IMR-90 (cell line): ENCODE measurements at regions of chr18 and their contacts with region 1.

Region 1: DNA sequence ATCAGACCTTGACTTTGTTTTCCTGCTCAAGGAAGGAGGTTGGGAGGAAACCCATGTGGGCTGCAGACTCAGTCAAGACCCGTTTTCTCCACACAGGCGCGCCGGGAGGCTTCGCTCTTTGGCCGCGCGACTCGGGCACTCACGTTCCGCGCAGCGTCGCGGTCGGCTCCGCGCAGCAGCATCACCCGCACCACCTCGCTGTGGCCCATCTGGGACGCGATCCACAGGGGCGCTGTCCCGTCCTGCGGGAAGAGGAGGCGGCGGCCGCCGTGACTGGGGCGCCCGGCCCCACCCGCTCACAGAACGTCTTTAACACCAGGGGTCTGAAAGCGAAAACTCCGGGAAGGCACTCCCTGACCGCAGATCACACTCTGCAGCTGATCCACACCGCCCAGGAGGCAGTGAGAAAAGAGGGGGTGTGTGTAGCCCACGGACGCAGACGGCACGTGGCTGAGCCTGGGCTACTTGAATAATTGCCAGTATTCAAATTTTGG is 33.1 kb upstream of the NPC1 start:
- DNase-seq: no peak
- ATAC-seq: peak; percentile 80
- H3K4me3 ChIP-seq: peak overlapping the region; percentile 48
- H3K27ac ChIP-seq: no peak overlapping the region; the same call in 1 of the 2 replicates
- H3K4me1 ChIP-seq: peaks cover 6% of the 10 kb centered on the region
- H3K27me3 ChIP-seq: peaks cover 23% of the 10 kb centered on the region
- CTCF ChIP-seq: no peak
- POLR2A ChIP-seq: no peak
- RAD21 ChIP-seq: no peak

Region 2: DNA sequence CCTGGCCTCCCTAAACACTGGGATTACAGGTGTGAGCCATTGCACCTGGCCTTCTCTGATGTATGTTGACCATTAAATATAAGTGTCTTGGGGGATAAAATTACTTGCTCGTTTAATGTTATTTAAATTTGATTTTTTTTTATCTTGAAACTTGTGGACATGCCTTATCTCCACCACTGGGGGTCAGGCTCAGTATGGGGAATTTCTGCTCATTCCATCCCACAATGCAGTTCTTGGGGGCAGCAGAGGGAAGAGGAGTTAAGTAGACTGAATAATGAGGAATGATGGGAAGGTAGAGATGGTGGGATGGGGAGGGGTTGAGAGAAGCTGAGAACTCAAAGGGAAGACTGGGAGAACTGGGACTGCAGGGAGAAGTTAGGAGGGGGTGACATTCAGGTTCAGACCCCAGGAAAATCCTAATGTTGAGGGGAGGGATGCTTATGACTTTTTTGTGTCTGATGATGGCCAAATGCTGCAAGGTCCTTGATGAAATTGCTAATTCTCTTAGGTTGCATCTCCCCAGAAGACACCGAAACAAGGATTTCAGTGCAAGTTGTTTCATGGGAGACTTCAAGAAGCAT is 1704.6 kb before region 1 on chr18:
- CTCF ChIA-PET with region 1: no interaction called
- POLR2A ChIA-PET with region 1: no interaction called
- dilution Hi-C with region 1: no loop called
- in situ Hi-C with region 1: no loop called
- intact Hi-C with region 1: no loop called
- DNase-seq: peak; percentile 62
- ATAC-seq: peak; percentile 92
- H3K4me3 ChIP-seq: no peak overlapping the region
- H3K27ac ChIP-seq: no peak overlapping the region
- H3K4me1 ChIP-seq: no peaks in the 10 kb centered on the region
- H3K27me3 ChIP-seq: peaks cover 16% of the 10 kb centered on the region
- CTCF ChIP-seq: peak; percentile 86
- POLR2A ChIP-seq: no peak
- RAD21 ChIP-seq: peak; percentile 85

Region 3: DNA sequence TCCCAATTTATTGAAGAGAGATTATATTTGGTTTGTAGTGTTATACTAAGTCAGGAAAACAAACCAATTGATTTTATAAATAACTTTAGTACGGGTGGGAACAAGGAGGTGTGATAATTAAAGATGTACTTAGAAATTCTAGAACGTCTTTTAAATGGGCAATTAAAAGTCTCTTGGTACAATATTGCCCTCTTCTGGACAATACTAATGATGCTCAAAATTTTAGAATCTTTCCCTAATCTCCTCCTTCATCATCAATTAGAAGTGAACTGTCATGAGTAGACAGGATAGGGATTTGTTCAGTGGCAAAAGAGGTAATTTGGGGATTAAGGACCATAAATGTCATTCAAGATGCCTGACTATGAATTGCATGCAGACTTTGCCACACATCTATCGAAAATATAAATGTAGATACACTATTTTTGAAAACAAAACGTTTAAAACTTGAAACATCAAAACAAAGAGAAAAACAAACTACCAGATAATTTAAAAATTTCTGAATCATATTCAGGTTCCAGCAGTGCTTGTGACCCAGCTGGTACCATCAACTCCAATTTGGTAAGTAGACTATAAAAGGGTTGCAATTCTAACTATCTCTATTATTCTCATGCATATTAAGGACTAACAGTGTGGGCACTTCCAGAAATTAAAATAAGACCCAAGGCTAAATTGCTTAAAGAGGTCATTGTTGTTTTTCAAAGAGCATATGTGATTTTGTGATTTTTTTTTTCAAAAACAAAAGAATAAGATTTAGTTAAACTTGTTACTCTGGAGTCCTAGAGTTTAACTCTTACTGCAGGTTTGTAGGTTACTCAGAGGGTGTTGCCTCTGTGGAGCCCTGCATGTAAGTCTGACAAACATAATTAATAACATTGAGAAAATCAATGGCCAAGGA is 193.4 kb after region 1 on chr18:
- CTCF ChIA-PET with region 1: interaction called, 3 read pairs
- POLR2A ChIA-PET with region 1: no interaction called
- dilution Hi-C with region 1: no loop called
- in situ Hi-C with region 1: loop called (anchors 5 kb)
- intact Hi-C with region 1: loop called (anchors 1 kb)
- DNase-seq: peak; percentile 19
- ATAC-seq: peak; percentile 61; the same call in 1 of the 2 replicates
- H3K4me3 ChIP-seq: no peak overlapping the region
- H3K27ac ChIP-seq: no peak overlapping the region
- H3K4me1 ChIP-seq: no peaks in the 10 kb centered on the region
- H3K27me3 ChIP-seq: peaks cover 30% of the 10 kb centered on the region
- CTCF ChIP-seq: peak; percentile 66
- POLR2A ChIP-seq: no peak
- RAD21 ChIP-seq: peak; percentile 67

Region 4: GRCh38 chr18:23887493-23887892 is 268.1 kb after region 1 on chr18:
- CTCF ChIA-PET with region 1: no interaction called
- POLR2A ChIA-PET with region 1: no interaction called
- dilution Hi-C with region 1: no loop called
- in situ Hi-C with region 1: no loop called
- intact Hi-C with region 1: no loop called
- DNase-seq: peak; percentile 15
- ATAC-seq: peak; percentile 28; the same call in 1 of the 2 replicates
- H3K4me3 ChIP-seq: no peak overlapping the region
- H3K27ac ChIP-seq: no peak overlapping the region
- H3K4me1 ChIP-seq: peaks cover 5% of the 10 kb centered on the region
- H3K27me3 ChIP-seq: no peaks in the 10 kb centered on the region
- CTCF ChIP-seq: no peak
- POLR2A ChIP-seq: no peak
- RAD21 ChIP-seq: no peak